ENCODE measurements at regions of chr3 and their contacts with region 1.

Region 1: DNA sequence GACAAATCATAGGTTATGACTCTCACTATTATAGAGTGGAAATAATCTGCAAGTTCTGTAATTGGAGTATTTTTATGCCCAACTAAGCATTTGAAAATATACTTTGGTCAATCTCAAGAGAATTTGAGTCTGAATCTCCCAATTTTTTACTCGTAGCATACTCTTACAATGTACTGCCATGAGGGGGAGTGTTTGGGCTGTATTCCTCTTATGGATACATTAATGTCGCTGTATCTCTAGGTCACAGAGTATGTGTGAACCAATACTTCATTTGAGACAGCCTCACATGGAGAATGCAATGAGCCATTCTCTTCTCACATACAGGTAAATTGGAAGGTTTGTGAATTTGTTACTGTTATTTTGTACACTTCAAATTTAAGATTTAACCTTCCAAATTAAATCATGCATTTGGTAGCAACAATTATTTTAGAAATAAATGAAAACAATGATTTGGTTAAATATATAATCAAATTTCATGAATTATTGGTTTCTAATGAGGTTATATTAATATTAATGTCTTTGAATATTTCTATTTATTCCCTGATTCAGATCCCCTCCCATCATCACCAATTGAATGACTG is 5.5 kb upstream of the CD200 start:
- DNase-seq: peak; percentile 59
- CTCF ChIP-seq: peak; percentile 49

Region 2: GRCh38 chr3:112519424-112520001 is 192.1 kb after region 1 on chr3:
- in situ Hi-C with region 1: loop called (anchors 25 kb)
- DNase-seq: peak; percentile 54
- CTCF ChIP-seq: peak; percentile 59

Measured in GM13976 (cell line).